ENCODE measurements at regions of chr15 and their contacts with region 1.

Region 1: DNA sequence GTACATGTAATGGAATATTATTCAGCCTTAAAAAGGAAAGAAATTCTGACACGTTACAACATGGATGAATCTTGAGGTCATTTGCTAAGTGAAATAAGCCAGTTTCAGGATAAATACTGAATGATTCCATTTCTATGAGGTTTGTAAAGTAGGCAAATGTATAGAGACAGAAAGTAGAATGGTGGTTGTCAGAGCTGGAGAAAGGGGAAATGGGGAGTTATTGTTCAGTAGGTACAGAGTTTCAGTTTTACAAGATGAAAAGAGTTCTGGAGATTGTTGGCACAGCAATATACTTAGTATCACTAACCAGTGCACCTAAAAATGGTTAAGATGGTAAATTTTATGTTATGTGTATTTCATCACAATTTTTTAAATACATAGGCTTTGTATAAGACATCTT is 60.6 kb downstream of the USP8 start:
- DNase-seq: no peak
- ATAC-seq: no peak
- H3K4me3 ChIP-seq: no peak overlapping the region
- H3K4me3 Mint-ChIP-seq: no peak overlapping the region
- H3K27ac ChIP-seq: no peak overlapping the region
- H3K27ac Mint-ChIP-seq: no peak overlapping the region
- H3K4me1 ChIP-seq: no peaks in the 10 kb centered on the region
- H3K4me1 Mint-ChIP-seq: peaks cover 2% of the 10 kb centered on the region
- H3K27me3 ChIP-seq: no peaks in the 10 kb centered on the region
- H3K27me3 Mint-ChIP-seq: no peaks in the 10 kb centered on the region
- CTCF ChIP-seq: no peak

Region 2: DNA sequence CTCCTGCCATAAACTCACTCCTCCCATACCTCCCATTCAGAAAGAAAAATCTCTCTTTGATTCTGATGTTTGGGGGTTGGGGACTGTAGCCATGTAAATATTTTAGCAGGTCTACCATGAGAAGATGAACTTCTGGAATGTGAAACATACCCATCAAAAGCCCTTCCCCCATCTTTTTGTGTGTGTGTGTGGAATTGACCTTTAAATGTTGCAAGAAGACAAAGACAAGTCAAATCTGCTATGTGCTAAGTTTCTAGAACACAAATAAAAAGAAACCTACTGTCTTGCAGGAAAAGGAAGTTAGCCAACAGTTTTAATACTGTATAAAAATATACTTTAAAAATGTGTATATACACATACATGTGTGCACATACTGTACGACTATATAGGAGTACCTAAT is 91.4 kb after region 1 on chr15:
- CTCF ChIA-PET with region 1: no interaction called
- POLR2A ChIA-PET with region 1: no interaction called
- intact Hi-C with region 1: loop called in 1 of 2 experiments (anchors 5 kb)
- DNase-seq: no peak
- ATAC-seq: no peak
- H3K4me3 ChIP-seq: no peak overlapping the region
- H3K4me3 Mint-ChIP-seq: no peak overlapping the region
- H3K27ac ChIP-seq: no peak overlapping the region
- H3K27ac Mint-ChIP-seq: peak overlapping the region; percentile 12
- H3K4me1 ChIP-seq: no peaks in the 10 kb centered on the region
- H3K4me1 Mint-ChIP-seq: no peaks in the 10 kb centered on the region
- H3K27me3 ChIP-seq: no peaks in the 10 kb centered on the region
- H3K27me3 Mint-ChIP-seq: no peaks in the 10 kb centered on the region
- CTCF ChIP-seq: no peak